Head of caudate nucleus (tissue), 42 donors: ENCODE measurements at regions of chr1 and their contacts with region 1.

Region 1: DNA sequence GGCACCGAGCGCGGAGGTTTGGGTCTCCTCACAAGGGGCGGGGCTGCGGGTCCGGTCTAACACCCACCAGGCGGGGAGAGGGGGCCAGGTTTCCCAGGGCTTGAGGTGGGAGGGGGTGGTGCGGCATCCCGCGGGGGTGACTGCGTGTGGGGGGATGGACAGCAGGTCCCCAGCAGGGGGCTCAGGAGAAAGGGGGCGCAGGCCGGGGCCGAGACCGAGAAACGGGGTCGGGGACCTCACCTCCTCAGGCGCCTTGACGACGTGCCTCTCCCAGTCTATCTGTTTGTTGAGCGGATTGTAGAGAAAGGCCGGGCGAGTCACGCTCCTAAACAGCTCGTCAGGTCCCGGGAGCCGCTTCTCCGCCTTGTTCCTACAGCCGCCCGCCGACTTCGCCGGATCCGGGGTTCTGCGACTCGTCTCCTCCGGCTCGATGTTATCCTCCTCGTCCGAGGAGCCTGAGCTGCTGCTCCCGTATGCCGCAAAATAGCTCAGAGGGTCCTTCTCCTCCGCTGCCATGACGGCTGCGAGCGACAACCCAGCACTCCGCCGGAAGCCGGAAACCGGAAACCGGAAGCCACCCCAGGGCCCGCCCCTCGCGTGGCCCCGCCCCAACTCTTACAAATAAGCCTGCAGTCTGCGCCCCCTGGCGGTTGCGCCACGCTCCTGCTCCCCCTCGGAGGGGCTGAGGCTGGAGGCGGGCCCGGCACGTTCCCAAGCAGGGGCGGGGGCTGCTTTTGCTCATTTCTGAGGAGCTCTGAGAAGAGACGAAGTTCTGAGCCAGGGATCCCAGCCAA is at the start of gene C1orf52:
- DNase-seq: peak; percentile 92 to 99 (median 96)

Region 2: GRCh38 chr1:84944767-84945486 is 314.4 kb before region 1 on chr1:
- intact Hi-C with region 1: loop called (anchors 5 kb)
- DNase-seq: peak; percentile 11 to 89 (median 67)

Region 3: DNA sequence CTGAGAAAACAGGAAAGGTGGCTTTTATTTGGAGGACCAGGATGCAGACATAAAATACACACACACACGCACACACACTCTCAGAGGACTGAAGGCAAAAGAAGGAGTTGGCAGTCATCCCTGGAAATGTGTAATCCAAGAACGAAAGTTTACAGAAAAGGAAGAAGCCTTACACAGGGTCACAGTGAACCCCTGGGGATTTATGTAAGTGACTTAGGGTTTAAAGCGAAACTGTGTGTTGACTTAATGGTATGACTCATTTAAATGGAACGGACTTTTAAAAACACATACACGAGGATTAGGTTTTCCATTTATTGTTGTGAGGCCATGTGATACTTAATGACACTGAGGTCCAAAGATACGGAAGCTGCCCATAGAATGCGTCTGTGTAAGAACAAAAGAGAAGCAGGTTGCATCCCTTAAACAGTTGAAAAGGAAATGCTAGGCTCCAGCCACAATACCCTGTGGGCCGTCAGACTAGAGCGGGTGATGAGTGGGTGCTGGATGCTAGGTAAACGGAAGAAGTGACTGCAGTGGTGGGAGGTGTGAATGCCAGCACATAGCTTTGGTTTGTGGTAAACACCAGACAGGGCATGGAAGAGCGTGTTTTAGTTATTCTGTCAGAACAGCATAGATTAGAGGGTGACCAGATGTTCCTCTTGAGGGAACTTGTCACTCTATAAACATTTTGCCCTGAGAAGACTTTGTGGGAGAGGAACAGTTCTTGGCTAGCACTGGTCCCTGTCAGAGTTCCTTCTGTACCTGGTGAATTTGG is 38.7 kb after region 1 on chr1:
- intact Hi-C with region 1: no loop called
- DNase-seq: no peak

Region 4: DNA sequence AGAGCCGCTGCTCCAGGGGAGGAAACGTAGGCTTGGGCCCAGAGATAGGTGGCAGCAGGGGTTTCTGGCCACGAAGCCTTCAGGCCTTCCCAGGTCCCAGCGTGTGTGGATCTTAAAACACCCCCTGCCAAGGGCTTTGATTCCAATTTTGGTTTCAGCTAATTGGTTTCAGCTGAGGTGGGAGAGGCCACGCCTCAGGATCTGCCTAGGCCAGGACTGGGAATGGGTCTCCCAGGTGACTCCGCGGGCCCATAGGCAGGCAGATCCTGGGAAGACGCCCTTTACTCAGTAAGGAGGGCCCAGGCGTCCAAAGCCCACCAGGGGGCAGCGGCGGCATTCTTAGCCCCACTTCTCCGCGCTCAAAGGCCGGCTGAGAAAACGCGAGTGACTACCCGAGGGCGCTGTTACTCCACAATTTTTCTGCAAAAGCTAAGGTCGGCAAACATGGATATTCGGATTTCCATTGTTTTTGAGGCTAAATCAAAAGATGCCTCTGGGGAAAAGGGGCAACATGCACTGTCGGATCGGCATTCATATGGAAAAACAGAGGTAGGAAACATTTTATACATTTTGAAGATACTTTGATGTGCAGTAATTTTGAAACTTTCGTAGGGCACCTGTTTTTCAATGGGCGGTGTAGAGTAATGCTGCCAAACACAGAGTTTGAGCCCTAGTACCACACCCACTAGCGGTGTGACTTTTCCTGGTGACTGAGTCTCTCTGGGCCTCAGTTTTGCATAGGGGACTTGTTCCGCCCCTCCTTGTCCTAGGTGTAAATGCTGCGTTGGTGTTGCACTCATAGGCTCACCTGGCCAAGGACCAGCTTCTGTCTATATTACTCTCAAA is 48.9 kb after region 1 on chr1:
- intact Hi-C with region 1: no loop called
- DNase-seq: peak; percentile 37 to 90 (median 78)

Region 5: DNA sequence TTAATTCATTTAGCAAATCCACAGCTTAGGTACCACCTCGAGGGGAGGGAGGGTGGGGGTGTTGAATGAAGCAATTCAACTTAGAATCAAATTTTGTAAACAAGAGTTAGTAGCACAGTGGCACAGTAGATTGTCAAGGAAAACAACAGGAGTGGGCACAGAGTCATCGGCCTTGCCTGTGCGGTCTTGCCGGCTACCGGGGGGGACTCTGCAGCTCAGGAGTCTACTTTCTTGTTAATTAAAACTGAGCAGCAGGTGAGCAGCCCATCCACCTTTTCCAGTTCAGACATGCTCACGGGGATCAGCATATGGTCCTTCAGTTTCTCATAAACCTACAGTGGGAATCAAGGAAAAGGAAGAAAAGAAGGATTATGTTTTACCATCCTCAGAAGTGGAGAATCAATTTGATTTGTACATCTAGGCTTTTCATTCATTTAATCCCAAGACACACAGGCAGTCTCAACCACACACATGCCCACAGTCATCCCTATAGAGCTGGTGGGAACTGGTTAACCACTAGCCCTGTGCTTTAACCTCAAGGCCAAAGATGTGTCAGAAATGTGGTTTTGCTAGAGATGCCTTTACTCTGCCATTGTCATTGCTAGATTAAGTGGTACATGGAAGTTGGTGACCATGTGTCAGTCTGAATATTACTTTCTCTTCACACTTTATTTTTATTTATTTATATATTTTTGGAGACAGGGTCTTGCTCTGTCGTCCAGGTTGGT is 62.1 kb after region 1 on chr1:
- intact Hi-C with region 1: no loop called
- DNase-seq: no peak

Region 6: GRCh38 chr1:86018283-86018923 is 759.1 kb after region 1 on chr1:
- intact Hi-C with region 1: no loop called
- DNase-seq: peak in 17 of 42 donors; percentile 3 to 58 (median 14)